ENCODE measurements at regions of chr3 and their contacts with region 1.

Region 1: DNA sequence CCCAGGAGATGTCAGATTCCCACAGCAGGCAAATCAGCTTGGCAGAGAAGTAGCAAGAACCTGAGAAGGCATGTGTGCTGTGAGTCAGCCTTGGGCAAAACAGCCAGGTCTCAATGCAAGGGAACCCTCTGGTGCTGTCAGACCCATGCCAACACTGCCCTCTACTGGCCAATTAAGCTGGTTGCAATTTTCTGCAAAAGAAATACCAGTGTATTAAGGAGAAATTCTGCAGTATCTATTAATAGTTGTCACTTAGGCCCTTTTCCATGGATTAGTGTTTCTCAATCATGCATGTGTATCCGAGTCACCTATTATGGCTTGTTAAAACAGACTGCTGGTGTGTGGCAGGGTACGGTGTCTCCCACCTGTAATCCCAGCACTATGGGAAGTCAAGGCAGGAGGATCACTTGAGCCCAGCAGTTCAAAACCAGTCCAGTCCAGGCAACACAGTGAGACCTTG is 26.2 kb downstream of the MAP4 start:
- DNase-seq: peak; percentile 72
- H3K4me3 ChIP-seq: no peak overlapping the region
- H3K27ac ChIP-seq: peak overlapping the region in 1 of 2 experiments; percentile 66; a peak in 1 of 4 replicates
- H3K4me1 ChIP-seq: peaks cover 6 to 14% of the 10 kb centered on the region in 2 experiments; a peak in 3 of 4 replicates
- H3K27me3 ChIP-seq: no peaks in the 10 kb centered on the region
- CTCF ChIP-seq: peak; percentile 96
- EP300 ChIP-seq: no peak
- RAD21 ChIP-seq: peak; percentile 97

Region 2: DNA sequence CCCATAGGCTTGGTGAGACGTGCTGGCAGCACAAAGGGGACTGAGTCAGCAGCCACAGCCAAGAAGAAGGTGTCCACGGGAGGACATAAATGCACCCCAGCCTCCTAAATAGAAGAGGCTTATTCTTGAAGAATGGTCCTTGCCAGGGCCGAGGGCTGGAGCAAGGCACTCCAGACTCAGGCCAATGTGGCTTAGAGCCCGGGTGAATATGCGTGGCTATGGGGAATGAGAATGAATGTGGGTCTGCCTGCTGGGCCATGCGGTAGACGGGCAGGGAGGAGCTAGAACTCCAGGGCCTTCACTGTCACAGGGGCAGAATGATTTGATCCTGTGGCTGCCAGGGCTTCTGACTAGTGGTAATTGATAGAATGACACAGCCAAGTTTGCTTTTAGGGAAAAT is 153.0 kb before region 1 on chr3:
- CTCF ChIA-PET with region 1: interaction called, 55 read pairs
- POLR2A ChIA-PET with region 1: no interaction called
- DNase-seq: no peak
- H3K4me3 ChIP-seq: no peak overlapping the region
- H3K27ac ChIP-seq: no peak overlapping the region
- H3K4me1 ChIP-seq: no peaks in the 10 kb centered on the region
- H3K27me3 ChIP-seq: no peaks in the 10 kb centered on the region
- CTCF ChIP-seq: no peak
- EP300 ChIP-seq: no peak
- RAD21 ChIP-seq: no peak

Region 3: GRCh38 chr3:47874913-47875312 is 115.1 kb before region 1 on chr3:
- CTCF ChIA-PET with region 1: interaction called, 15 read pairs
- POLR2A ChIA-PET with region 1: no interaction called
- DNase-seq: no peak
- H3K4me3 ChIP-seq: no peak overlapping the region
- H3K27ac ChIP-seq: no peak overlapping the region
- H3K4me1 ChIP-seq: 0 out of 4 replicates have a peak, but pooled peaks cover 0 to 15% of the 10 kb centered on the region in 2 experiments
- H3K27me3 ChIP-seq: no peaks in the 10 kb centered on the region
- CTCF ChIP-seq: no peak
- EP300 ChIP-seq: no peak
- RAD21 ChIP-seq: no peak

Region 4: DNA sequence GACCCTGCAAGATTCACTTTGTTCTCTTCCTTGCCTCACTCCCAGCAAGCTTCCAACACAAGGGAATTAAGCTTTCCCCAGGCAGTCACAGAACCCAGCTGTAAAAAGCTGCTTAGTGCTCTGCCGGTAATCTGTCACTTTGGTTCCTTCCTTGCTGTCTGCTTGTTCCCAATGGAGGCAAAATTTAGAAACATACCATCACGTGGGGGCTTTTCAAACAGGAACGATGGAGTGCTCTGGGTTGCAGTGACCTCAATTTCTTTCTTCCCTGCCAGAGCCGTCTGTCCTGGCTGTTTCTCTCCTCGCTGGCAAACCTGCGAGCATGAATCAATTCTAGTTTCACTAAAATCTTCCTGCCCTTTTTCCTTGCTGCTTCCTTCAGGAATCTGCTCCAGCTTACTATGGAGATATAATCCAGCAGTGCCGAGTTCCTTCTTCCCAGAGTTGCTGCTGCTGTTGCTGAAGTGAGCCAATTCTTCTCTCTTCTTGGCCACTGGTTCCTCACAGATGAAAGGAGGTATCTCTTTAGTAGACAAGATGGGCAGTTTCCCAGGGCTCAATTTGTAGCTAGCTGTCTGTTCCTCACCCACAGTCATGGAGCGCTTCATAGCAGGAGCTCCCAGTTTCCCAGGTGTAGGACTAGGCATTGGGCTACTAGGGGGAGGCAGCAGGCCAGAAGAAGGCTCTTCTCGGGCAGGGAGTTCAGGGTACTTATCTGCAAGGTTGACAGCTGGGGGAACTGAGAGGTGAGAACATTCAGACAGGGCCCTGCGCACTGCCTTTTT is 99.0 kb before region 1 on chr3:
- CTCF ChIA-PET with region 1: interaction called, 11 read pairs
- POLR2A ChIA-PET with region 1: no interaction called
- DNase-seq: no peak
- H3K4me3 ChIP-seq: no peak overlapping the region
- H3K27ac ChIP-seq: no peak overlapping the region
- H3K4me1 ChIP-seq: no peaks in the 10 kb centered on the region
- H3K27me3 ChIP-seq: no peaks in the 10 kb centered on the region
- CTCF ChIP-seq: no peak
- EP300 ChIP-seq: no peak
- RAD21 ChIP-seq: no peak

Region 5: DNA sequence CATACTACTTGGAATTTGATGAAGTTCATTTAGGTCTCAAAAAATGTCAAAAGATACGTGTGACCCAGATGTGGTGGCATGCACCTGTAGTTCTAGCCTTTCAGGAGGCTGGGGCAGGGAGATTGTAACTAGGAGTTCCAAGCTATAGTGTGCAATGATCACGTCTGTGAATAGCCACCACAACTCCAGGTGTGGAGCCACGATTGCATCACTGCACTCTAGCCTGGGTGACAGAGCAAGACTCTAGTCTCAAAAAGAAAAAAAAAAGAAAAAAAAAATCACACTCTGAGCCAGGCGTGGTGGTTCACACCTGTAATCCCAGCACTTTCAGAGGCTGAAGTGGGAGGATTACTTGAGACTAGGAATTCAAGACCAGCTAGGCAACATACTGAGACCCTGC is 12.0 kb after region 1 on chr3:
- CTCF ChIA-PET with region 1: interaction called, 46 read pairs
- POLR2A ChIA-PET with region 1: no interaction called
- DNase-seq: no peak
- H3K4me3 ChIP-seq: no peak overlapping the region
- H3K27ac ChIP-seq: no peak overlapping the region
- H3K4me1 ChIP-seq: no peaks in the 10 kb centered on the region
- H3K27me3 ChIP-seq: no peaks in the 10 kb centered on the region
- CTCF ChIP-seq: no peak
- EP300 ChIP-seq: no peak
- RAD21 ChIP-seq: no peak

Region 6: GRCh38 chr3:48151058-48151806 is 161.2 kb after region 1 on chr3:
- CTCF ChIA-PET with region 1: interaction called, 30 read pairs
- POLR2A ChIA-PET with region 1: no interaction called
- DNase-seq: peak; percentile 84
- H3K4me3 ChIP-seq: peak overlapping the region in 1 of 2 experiments; percentile 47; a peak in 1 of 4 replicates
- H3K27ac ChIP-seq: no peak overlapping the region
- H3K4me1 ChIP-seq: peaks cover 0 to 5% of the 10 kb centered on the region in 2 experiments; a peak in 2 of 4 replicates
- H3K27me3 ChIP-seq: no peaks in the 10 kb centered on the region
- CTCF ChIP-seq: peak; percentile 89
- EP300 ChIP-seq: no peak
- RAD21 ChIP-seq: peak; percentile 99

Region 7: GRCh38 chr3:48178072-48178471 is 188.1 kb after region 1 on chr3:
- CTCF ChIA-PET with region 1: no interaction called
- POLR2A ChIA-PET with region 1: no interaction called
- DNase-seq: no peak
- H3K4me3 ChIP-seq: no peak overlapping the region
- H3K27ac ChIP-seq: no peak overlapping the region
- H3K4me1 ChIP-seq: no peaks in the 10 kb centered on the region
- H3K27me3 ChIP-seq: no peaks in the 10 kb centered on the region
- CTCF ChIP-seq: no peak
- EP300 ChIP-seq: no peak
- RAD21 ChIP-seq: no peak

Region 8: GRCh38 chr3:48400824-48401433 is 410.9 kb after region 1 on chr3:
- CTCF ChIA-PET with region 1: no interaction called
- POLR2A ChIA-PET with region 1: no interaction called
- DNase-seq: peak; percentile 81
- H3K4me3 ChIP-seq: no peak overlapping the region
- H3K27ac ChIP-seq: no peak overlapping the region; a peak in 1 of 4 replicates
- H3K4me1 ChIP-seq: peaks cover 6 to 23% of the 10 kb centered on the region in 2 experiments; a peak in 2 of 4 replicates
- H3K27me3 ChIP-seq: no peaks in the 10 kb centered on the region
- CTCF ChIP-seq: peak; percentile 82
- EP300 ChIP-seq: no peak
- RAD21 ChIP-seq: peak; percentile 86